PC-9 (cell line): ENCODE measurements at regions of chr14 and their contacts with region 1.

Region 1: GRCh38 chr14:104591506-104592291 is 12.1 kb downstream of the C14orf180 start:
- DNase-seq: no peak
- H3K4me3 ChIP-seq: no peak overlapping the region
- H3K27ac ChIP-seq: no peak overlapping the region
- H3K4me1 ChIP-seq: no peaks in the 10 kb centered on the region
- H3K27me3 ChIP-seq: peaks cover 100% of the 10 kb centered on the region
- CTCF ChIP-seq: no peak

Region 2: DNA sequence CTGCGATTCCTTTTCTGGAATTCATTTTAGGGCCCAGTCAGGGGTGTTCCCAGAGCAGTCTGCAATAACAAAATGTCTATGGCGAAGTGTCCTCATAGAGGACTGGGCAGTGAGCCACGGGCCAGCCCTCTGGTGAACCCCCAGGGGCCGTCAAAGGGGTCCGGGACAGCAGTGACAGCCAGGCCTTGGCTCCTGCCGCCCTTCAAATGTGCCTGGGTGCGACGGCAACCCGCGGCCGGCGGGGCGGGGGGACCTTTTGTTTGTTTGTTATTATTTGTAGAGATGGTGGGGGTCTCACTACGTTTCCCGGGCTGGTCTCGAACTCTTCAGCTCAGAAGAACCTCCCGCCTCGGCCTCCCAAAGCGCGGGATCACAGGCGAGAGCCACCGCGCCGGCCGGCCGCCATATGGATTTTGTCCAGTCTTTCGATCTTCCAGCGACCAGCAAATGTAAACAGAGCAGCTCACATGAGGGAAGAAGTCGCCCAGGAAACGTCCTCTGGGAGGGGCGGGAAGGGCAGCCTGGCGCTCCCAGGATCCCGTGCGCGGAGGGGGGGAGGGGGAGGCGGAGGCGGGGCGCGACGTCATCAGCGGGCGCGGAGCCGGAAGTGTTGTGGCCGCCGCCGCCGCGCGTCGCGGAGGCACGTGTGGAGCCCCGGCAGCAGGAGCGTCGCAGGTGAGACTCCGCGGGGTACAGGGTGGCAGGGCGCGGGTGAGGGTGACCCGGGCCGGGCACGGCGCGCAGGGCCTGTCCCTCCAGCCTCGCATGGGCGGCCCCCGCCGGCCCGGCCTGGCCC is 1062.9 kb before region 1 on chr14 and contains the start of gene TRMT61A:
- CTCF ChIA-PET with region 1: no interaction called
- POLR2A ChIA-PET with region 1: no interaction called
- intact Hi-C with region 1: no loop called
- DNase-seq: peak; percentile 89 to 93
- H3K4me3 ChIP-seq: peak within 1 kb of the TSS; percentile 79
- H3K27ac ChIP-seq: peak within 1 kb of the TSS; percentile 23
- H3K4me1 ChIP-seq: peaks cover 23% of the 10 kb centered on the region
- H3K27me3 ChIP-seq: no peaks in the 10 kb centered on the region
- CTCF ChIP-seq: no peak
- total RNA-seq, gene TRMT61A: 22.5 and 25.9 TPM in 2 replicates

Region 3: DNA sequence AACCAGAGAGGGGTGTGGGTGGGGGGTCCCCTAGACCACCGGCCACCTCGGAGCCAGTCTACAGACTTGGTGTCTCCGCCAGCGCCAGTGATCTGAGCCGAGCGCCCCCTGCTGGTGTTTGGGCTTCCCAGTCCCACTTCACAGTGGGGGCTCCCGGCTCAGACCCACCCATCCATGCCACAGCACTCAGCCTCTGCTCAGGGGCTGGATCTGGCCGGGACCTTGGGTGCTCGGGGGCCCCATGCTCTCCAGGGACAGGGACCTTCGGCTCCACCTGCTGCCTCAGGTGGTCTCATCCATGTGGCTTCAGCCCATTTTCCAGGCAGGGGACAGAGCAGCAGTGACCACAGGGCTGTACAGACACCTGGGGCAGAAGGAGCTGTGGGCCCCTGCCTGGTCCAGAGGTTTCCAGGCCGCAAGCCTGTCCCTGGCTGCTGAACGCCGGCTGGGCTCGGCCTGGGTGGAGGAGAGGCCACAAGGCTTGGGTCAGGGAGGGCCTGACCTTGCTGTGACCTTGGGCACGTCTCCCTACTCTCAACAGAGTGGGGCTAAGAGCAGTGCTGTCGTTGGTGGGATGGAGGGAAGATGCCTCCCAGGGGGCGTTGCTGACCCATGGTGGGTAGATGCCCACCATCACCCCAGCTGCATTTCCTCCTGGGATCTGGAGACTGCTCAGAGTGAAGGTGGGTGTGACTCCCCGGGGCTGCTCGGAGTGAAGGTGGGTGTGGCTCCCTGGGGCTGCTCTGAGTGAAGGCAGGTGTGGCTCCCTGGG is 367.0 kb before region 1 on chr14:
- CTCF ChIA-PET with region 1: no interaction called
- POLR2A ChIA-PET with region 1: interaction called, 14 read pairs
- intact Hi-C with region 1: no loop called
- DNase-seq: no peak
- H3K4me3 ChIP-seq: no peak overlapping the region
- H3K27ac ChIP-seq: no peak overlapping the region
- H3K4me1 ChIP-seq: no peaks in the 10 kb centered on the region
- H3K27me3 ChIP-seq: peaks cover 39% of the 10 kb centered on the region
- CTCF ChIP-seq: no peak; the same call in 1 of the 2 replicates